PC-3 (cell line): ENCODE measurements at regions of chr7 and their contacts with region 1.

Region 1: GRCh38 chr7:105055621-105056020 is 41.6 kb downstream of the KMT2E start:
- DNase-seq: no peak
- ATAC-seq: no peak
- H3K4me3 ChIP-seq: no peak overlapping the region
- H3K27ac ChIP-seq: no peak overlapping the region
- H3K4me1 ChIP-seq: no peaks in the 10 kb centered on the region
- H3K27me3 ChIP-seq: no peaks in the 10 kb centered on the region
- CTCF ChIP-seq: no peak

Region 2: GRCh38 chr7:105036217-105037168 is 19.1 kb before region 1 on chr7:
- CTCF ChIA-PET with region 1: interaction called, 10 read pairs
- POLR2A ChIA-PET with region 1: no interaction called
- intact Hi-C with region 1: no loop called
- DNase-seq: no peak
- ATAC-seq: no peak
- H3K4me3 ChIP-seq: no peak overlapping the region
- H3K27ac ChIP-seq: no peak overlapping the region
- H3K4me1 ChIP-seq: peaks cover 4% of the 10 kb centered on the region; the same call in 1 of the 2 replicates
- H3K27me3 ChIP-seq: no peaks in the 10 kb centered on the region
- CTCF ChIP-seq: no peak

Region 3: GRCh38 chr7:105795390-105795729 is 739.7 kb after region 1 on chr7:
- CTCF ChIA-PET with region 1: no interaction called
- POLR2A ChIA-PET with region 1: no interaction called
- intact Hi-C with region 1: no loop called
- DNase-seq: peak; percentile 48
- ATAC-seq: 0 out of 2 replicates have a peak, but pooled peaks have one; percentile 2
- H3K4me3 ChIP-seq: peak overlapping the region; percentile 46; the same call in 1 of the 2 replicates
- H3K27ac ChIP-seq: peak overlapping the region; percentile 87
- H3K4me1 ChIP-seq: peaks cover 46% of the 10 kb centered on the region
- H3K27me3 ChIP-seq: no peaks in the 10 kb centered on the region
- CTCF ChIP-seq: no peak